ENCODE measurements at regions of chr3 and their contacts with region 1.

Region 1: GRCh38 chr3:177197041-177197727 is at the start of gene TBL1XR1:
- DNase-seq: peak; percentile 80
- ATAC-seq: peak; percentile 58
- H3K4me3 Mint-ChIP-seq: peak within 1 kb of the TSS; percentile 97
- H3K27ac Mint-ChIP-seq: peak within 1 kb of the TSS; percentile 97
- H3K4me1 Mint-ChIP-seq: peaks cover 59% of the 10 kb centered on the region
- H3K27me3 Mint-ChIP-seq: no peaks in the 10 kb centered on the region
- CTCF ChIP-seq: no peak
- total RNA-seq, gene TBL1XR1: 312 and 372 TPM in 2 replicates

Region 2: DNA sequence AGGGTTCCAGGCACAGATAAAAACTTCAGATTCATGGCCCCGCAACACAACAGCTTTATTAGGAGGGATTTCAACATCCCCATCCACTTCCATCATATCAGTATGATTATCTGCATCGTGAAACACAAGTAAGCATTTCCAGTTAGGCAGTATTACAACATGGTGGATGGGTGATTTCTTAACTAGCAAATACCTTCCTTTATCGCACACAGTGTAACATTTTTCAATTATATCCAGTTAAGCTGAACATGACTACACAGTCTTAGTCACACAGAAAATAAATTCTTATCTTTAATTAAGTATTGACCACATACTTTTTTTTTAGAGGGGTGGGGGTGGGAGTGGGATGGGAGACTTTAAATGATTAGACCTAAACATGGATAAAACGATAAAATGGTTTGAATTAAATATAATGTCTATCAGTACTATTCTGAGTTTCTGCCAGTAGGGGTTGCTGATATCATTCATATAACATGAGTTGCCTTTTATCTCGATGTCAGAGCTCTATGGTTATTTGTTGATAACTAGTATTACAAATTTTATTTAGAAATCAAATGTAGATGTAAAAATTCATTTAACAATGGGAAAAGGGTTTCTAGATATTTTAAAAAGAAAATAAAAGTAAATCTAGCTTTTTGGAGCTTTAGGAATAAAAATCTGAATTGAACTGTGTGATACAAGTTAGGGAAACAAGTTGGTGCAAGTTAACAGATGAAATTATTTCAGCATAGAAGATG is 146.5 kb before region 1 on chr3:
- CTCF ChIA-PET with region 1: interaction called, 11 read pairs
- POLR2A ChIA-PET with region 1: interaction called, 29 read pairs
- intact Hi-C with region 1: loop called (anchors 1 kb)
- DNase-seq: no peak
- ATAC-seq: peak; percentile 77
- H3K4me3 Mint-ChIP-seq: no peak overlapping the region
- H3K27ac Mint-ChIP-seq: peak overlapping the region; percentile 56
- H3K4me1 Mint-ChIP-seq: peaks cover 14% of the 10 kb centered on the region
- H3K27me3 Mint-ChIP-seq: no peaks in the 10 kb centered on the region
- CTCF ChIP-seq: peak; percentile 69

Region 3: DNA sequence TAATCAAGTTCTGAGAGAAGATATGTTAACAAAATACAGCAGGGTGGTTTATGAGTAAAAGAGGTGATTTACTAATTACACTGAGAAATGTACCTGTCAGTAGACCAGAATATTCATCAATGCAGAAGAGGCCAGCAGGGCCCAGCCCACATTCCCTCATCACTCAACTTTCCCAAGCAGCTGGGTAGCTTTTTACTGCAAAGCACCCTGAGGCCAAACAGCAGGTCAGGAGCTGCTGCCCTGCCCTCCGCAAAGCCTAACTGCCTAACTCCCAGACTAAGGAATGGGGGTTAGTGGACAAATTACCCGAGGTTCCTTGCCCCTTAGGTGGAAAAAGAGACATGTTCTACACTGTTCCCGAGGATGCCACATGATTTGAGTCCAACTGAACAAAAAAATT is 108.1 kb before region 1 on chr3:
- CTCF ChIA-PET with region 1: no interaction called
- POLR2A ChIA-PET with region 1: no interaction called
- intact Hi-C with region 1: no loop called
- DNase-seq: no peak
- ATAC-seq: no peak
- H3K4me3 Mint-ChIP-seq: no peak overlapping the region
- H3K27ac Mint-ChIP-seq: peak overlapping the region; percentile 41
- H3K4me1 Mint-ChIP-seq: peaks cover 72% of the 10 kb centered on the region
- H3K27me3 Mint-ChIP-seq: no peaks in the 10 kb centered on the region
- CTCF ChIP-seq: no peak

Region 4: DNA sequence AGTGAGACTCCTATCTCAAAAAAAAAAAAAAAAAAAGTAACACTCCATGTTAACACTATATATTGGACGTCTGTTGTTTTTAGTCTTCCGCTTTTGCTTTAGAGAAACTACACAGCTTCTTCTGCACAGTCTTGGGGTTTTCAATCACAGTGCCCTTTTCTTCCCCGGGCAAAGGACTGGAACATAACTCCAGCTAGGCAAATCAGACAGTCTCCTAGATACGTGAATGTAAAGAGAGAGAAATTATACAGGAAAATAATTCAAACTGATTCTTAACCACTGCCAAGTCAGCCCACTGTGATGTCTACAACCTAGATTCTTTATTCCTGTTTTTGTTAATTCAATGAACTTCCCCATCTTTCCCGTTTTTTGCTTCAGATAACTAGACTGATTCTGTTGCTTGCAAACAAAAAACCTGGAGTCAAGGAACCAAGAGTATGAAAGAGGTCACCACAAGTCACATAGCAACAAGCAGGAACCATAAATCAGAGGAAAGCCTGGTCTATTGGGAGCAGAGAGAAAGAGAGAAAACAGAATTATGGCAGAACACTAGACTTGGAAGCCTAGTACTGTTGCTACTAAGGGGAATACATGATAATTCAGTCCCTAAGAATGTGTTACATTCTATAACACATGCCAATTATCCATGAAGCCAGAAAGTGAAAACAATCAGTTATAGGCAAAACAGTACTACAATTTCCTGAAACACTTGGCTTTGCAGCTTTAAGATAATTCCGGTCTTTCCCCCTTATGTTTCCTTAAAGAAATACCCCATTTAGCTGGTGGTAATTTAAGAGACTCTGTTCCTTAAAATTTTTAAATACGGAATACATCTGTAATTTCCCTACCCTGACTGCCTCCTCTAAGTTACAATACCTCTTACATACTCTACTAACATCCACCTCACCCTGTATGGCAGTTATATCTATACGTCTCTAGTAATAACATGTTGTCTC is 63.0 kb before region 1 on chr3:
- CTCF ChIA-PET with region 1: no interaction called
- POLR2A ChIA-PET with region 1: no interaction called
- intact Hi-C with region 1: no loop called
- DNase-seq: no peak
- ATAC-seq: no peak
- H3K4me3 Mint-ChIP-seq: no peak overlapping the region
- H3K27ac Mint-ChIP-seq: peak overlapping the region; percentile 38
- H3K4me1 Mint-ChIP-seq: peaks cover 74% of the 10 kb centered on the region
- H3K27me3 Mint-ChIP-seq: no peaks in the 10 kb centered on the region
- CTCF ChIP-seq: no peak

Region 5: DNA sequence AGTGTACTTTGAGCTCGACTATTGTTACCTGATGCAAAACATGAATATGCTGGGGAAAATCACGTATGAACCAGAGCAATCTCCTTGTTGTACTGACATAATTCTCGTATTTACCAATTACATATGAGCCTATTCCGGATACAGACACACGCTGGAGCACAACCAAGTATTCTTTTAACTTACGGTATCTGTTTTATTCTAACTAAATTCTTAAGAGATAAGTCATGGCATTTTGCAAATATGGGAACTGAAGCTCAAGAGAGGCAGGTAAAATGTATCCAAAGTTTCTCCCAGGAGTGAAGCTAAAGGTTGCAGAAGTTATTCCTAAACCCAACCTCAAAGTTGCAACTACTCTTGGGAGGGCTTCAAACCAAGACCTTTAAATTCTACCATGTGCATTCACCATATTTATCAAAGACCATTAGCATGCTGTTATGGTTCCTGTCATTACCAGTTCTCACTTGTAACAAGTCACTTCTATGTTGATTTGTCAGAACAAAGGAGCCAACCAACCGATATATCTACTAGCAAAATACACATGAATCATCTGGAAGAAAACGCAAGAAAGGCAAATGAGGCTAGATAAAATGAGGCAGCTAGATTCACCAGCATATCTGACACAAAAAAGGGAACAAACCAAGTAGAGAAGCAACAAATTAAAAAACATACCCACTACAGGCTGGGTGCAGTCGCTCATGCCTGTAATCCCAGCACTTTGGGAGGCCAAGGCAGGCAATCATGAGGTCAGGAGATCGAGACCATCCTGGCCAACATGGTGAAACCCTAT is 17.7 kb before region 1 on chr3:
- CTCF ChIA-PET with region 1: no interaction called
- POLR2A ChIA-PET with region 1: interaction called, 6 read pairs
- intact Hi-C with region 1: loop called (anchors 2 kb)
- DNase-seq: no peak
- ATAC-seq: peak; percentile 62
- H3K4me3 Mint-ChIP-seq: peak overlapping the region; percentile 13
- H3K27ac Mint-ChIP-seq: peak overlapping the region; percentile 33
- H3K4me1 Mint-ChIP-seq: peaks cover 66% of the 10 kb centered on the region
- H3K27me3 Mint-ChIP-seq: no peaks in the 10 kb centered on the region
- CTCF ChIP-seq: no peak

Region 6: GRCh38 chr3:177245250-177245649 is 48.1 kb after region 1 on chr3:
- CTCF ChIA-PET with region 1: interaction called, 7 read pairs
- POLR2A ChIA-PET with region 1: interaction called, 26 read pairs
- intact Hi-C with region 1: loop called (anchors 1 kb)
- DNase-seq: no peak
- ATAC-seq: no peak
- H3K4me3 Mint-ChIP-seq: no peak overlapping the region
- H3K27ac Mint-ChIP-seq: peak overlapping the region; percentile 80
- H3K4me1 Mint-ChIP-seq: peaks cover 52% of the 10 kb centered on the region
- H3K27me3 Mint-ChIP-seq: no peaks in the 10 kb centered on the region
- CTCF ChIP-seq: no peak

Region 7: DNA sequence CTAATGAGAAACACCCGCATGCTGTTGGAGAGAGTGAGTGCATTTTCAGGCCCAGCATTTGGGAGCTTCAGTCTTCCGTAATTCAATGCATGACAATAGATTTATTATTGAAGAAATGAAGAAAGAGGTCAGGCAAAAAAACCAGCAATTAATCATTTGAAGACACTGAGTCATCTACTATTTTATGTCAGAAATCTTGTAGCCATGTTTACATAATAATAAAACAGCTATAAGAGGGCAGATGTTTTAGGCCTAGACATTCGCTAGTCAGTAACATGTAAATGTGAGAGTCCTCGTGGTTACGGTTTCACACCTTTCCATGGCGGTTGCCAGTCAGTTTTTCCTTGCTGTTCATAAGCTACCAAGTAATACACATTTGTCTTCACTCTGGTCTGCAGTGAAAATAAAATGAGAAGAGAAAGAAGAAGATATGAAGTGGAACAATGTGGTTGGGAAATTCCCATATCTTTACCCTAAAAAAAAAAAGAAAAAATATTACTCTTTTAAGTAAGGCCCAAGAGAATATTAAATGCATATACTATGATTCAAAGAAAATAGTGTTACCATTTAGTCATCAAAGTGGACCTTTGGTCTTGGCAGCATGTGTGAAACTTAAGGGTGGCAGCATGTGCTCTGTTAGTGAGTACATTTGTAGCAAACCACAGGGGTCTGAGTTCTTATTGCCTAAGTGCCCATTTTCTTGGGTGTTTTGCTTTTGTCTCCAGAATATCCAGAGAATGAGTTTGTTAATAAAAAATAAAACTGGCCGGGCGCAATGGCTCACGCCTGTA is 140.6 kb after region 1 on chr3:
- CTCF ChIA-PET with region 1: interaction called, 16 read pairs
- POLR2A ChIA-PET with region 1: interaction called, 70 read pairs
- intact Hi-C with region 1: loop called (anchors 1 kb)
- DNase-seq: no peak
- ATAC-seq: peak; percentile 82
- H3K4me3 Mint-ChIP-seq: peak overlapping the region; percentile 67
- H3K27ac Mint-ChIP-seq: peak overlapping the region; percentile 98
- H3K4me1 Mint-ChIP-seq: peaks cover 61% of the 10 kb centered on the region
- H3K27me3 Mint-ChIP-seq: no peaks in the 10 kb centered on the region
- CTCF ChIP-seq: no peak

Region 8: GRCh38 chr3:177441813-177442646 is 244.8 kb after region 1 on chr3:
- CTCF ChIA-PET with region 1: no interaction called
- POLR2A ChIA-PET with region 1: no interaction called
- intact Hi-C with region 1: loop called (anchors 5 kb)
- DNase-seq: peak; percentile 18
- ATAC-seq: peak; percentile 95
- H3K4me3 Mint-ChIP-seq: no peak overlapping the region
- H3K27ac Mint-ChIP-seq: peak overlapping the region; percentile 80
- H3K4me1 Mint-ChIP-seq: peaks cover 20% of the 10 kb centered on the region
- H3K27me3 Mint-ChIP-seq: no peaks in the 10 kb centered on the region
- CTCF ChIP-seq: no peak